Dendritic cell treated with granulocyte-macrophage colony-stimulating factor and Interleukin-4, amounts not matched to agents 40 ng/mL and 50 ng/mL, for 4 days (primary cell): ENCODE measurements at regions of chr13 and their contacts with region 1.

Region 1: GRCh38 chr13:28531077-28531844 is 36.3 kb upstream of the FLT1 start:
- H3K4me3 Mint-ChIP-seq: no peak overlapping the region
- H3K27ac Mint-ChIP-seq: no peak overlapping the region
- H3K4me1 Mint-ChIP-seq: peaks cover 12% of the 10 kb centered on the region
- H3K27me3 Mint-ChIP-seq: peaks cover 42% of the 10 kb centered on the region

Region 2: DNA sequence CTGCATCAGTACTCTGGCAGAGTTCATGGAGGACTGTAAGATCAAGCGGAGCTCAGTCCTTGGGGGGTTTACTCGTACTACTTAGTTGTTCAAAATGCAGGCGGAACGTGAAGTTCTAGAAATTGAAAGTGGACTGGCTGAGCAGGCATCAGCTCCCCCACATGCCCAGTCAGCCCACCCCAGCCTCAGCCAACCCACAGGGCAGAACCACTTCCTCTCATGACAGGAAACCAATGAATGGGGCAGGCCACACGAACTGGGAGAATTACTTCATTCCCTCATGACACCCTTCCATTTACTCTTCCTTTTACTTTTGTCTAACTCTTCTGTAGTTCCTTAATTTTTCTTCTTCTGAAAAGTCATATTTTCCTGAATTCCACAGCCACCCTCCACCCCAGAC is 108.3 kb before region 1 on chr13:
- intact Hi-C with region 1: no loop called
- H3K4me3 Mint-ChIP-seq: peak overlapping the region; percentile 50
- H3K27ac Mint-ChIP-seq: peak overlapping the region; percentile 78
- H3K4me1 Mint-ChIP-seq: peaks cover 36% of the 10 kb centered on the region
- H3K27me3 Mint-ChIP-seq: peaks cover 39% of the 10 kb centered on the region

Region 3: GRCh38 chr13:28494776-28495537 is 36.3 kb before region 1 on chr13 and contains the start of gene FLT1:
- intact Hi-C with region 1: loop called (anchors 5 kb)
- H3K4me3 Mint-ChIP-seq: peak within 1 kb of the TSS; percentile 77
- H3K27ac Mint-ChIP-seq: peak within 1 kb of the TSS; percentile 50
- H3K4me1 Mint-ChIP-seq: peaks cover 32% of the 10 kb centered on the region
- H3K27me3 Mint-ChIP-seq: peaks cover 73% of the 10 kb centered on the region